ENCODE measurements at regions of chr15 and their contacts with region 1.

Region 1: GRCh38 chr15:92091155-92091734 is 237.7 kb downstream of the SLCO3A1 start:
- DNase-seq: peak; percentile 66
- H3K4me3 ChIP-seq: no peak overlapping the region
- H3K27ac ChIP-seq: no peak overlapping the region
- H3K4me1 ChIP-seq: no peaks in the 10 kb centered on the region
- H3K27me3 ChIP-seq: no peaks in the 10 kb centered on the region
- CTCF ChIP-seq: peak; percentile 58

Region 2: GRCh38 chr15:92020765-92021164 is 70.5 kb before region 1 on chr15:
- intact Hi-C with region 1: no loop called
- DNase-seq: no peak
- H3K4me3 ChIP-seq: no peak overlapping the region
- H3K27ac ChIP-seq: no peak overlapping the region
- H3K4me1 ChIP-seq: no peaks in the 10 kb centered on the region
- H3K27me3 ChIP-seq: no peaks in the 10 kb centered on the region
- CTCF ChIP-seq: no peak

Region 3: GRCh38 chr15:92383519-92384326 is 292.5 kb after region 1 on chr15:
- intact Hi-C with region 1: loop called (anchors 5 kb)
- DNase-seq: peak; percentile 39
- H3K4me3 ChIP-seq: no peak overlapping the region
- H3K27ac ChIP-seq: no peak overlapping the region
- H3K4me1 ChIP-seq: no peaks in the 10 kb centered on the region
- H3K27me3 ChIP-seq: no peaks in the 10 kb centered on the region
- CTCF ChIP-seq: peak; percentile 68

Measured in colonic mucosa (tissue), 4 donors.